A673 (cell line): ENCODE measurements at regions of chr5 and their contacts with region 1.

Region 1: GRCh38 chr5:97591781-97592180 is 408.7 kb upstream of the RIOK2 start:
- DNase-seq: no peak
- H3K4me3 ChIP-seq: no peak overlapping the region
- H3K27ac ChIP-seq: no peak overlapping the region
- H3K4me1 ChIP-seq: no peaks in the 10 kb centered on the region
- H3K27me3 ChIP-seq: no peaks in the 10 kb centered on the region
- CTCF ChIP-seq: no peak

Region 2: GRCh38 chr5:97388794-97389193 is 203.0 kb before region 1 on chr5:
- CTCF ChIA-PET with region 1: no interaction called
- POLR2A ChIA-PET with region 1: no interaction called
- intact Hi-C with region 1: loop called (anchors 5 kb)
- DNase-seq: no peak
- H3K4me3 ChIP-seq: no peak overlapping the region
- H3K27ac ChIP-seq: no peak overlapping the region
- H3K4me1 ChIP-seq: no peaks in the 10 kb centered on the region
- H3K27me3 ChIP-seq: no peaks in the 10 kb centered on the region
- CTCF ChIP-seq: no peak

Region 3: GRCh38 chr5:97425511-97425910 is 166.3 kb before region 1 on chr5:
- CTCF ChIA-PET with region 1: no interaction called
- POLR2A ChIA-PET with region 1: no interaction called
- intact Hi-C with region 1: no loop called
- DNase-seq: peak; percentile 9
- H3K4me3 ChIP-seq: no peak overlapping the region
- H3K27ac ChIP-seq: no peak overlapping the region
- H3K4me1 ChIP-seq: no peaks in the 10 kb centered on the region
- H3K27me3 ChIP-seq: peaks cover 24% of the 10 kb centered on the region
- CTCF ChIP-seq: peak; percentile 37